K562 (cell line): ENCODE measurements at regions of chr20 and their contacts with region 1.

Region 1: DNA sequence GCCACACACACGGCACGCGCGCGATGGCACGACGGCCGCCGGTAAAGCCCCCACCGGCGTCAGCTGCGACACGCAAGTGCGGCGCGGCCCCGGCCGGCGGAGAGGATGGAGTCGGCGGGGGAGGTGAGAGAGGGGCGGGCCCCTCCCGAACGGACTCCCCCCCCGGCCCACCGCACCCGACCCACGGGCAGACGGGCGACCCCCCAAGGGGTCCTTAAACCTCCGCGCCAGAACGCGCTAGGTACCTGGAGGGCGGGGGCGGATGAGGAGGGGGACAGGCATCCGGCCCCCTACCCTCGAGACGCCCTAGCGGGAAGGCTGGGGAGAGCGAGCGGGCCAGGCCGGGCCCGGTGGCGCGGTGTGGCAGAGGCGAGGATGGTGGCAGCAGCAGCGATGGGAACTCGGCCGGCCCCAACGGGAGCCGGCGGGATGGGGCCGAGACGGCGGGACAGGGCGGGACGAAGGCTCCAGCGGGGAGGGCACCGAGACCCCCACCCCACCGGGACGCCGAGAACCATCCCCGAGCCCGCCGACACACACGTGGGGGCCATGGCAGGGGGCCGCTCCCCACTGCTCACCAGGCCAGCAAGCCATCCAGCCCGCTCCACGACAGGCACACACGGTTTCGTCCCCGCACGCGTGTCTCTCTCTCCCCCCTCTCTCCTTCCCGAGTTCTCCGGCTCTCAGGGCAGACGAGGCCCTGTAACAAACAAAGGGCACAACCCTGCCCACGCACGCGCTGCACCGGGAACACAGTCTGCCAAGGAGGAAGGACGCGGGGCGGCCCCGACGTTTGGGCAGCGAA is 1515.4 kb upstream of the DEFB115 start:
- DNase-seq: peak in 2 of 4 experiments; percentile 3
- ATAC-seq: no peak
- H3K4me3 ChIP-seq: no peak overlapping the region
- H3K27ac ChIP-seq: no peak overlapping the region
- H3K4me1 ChIP-seq: no peaks in the 10 kb centered on the region
- H3K27me3 ChIP-seq: no peaks in the 10 kb centered on the region
- CTCF ChIP-seq: no peak
- EP300 ChIP-seq: no peak
- POLR2A ChIP-seq: no peak
- RAD21 ChIP-seq: no peak

Region 2: DNA sequence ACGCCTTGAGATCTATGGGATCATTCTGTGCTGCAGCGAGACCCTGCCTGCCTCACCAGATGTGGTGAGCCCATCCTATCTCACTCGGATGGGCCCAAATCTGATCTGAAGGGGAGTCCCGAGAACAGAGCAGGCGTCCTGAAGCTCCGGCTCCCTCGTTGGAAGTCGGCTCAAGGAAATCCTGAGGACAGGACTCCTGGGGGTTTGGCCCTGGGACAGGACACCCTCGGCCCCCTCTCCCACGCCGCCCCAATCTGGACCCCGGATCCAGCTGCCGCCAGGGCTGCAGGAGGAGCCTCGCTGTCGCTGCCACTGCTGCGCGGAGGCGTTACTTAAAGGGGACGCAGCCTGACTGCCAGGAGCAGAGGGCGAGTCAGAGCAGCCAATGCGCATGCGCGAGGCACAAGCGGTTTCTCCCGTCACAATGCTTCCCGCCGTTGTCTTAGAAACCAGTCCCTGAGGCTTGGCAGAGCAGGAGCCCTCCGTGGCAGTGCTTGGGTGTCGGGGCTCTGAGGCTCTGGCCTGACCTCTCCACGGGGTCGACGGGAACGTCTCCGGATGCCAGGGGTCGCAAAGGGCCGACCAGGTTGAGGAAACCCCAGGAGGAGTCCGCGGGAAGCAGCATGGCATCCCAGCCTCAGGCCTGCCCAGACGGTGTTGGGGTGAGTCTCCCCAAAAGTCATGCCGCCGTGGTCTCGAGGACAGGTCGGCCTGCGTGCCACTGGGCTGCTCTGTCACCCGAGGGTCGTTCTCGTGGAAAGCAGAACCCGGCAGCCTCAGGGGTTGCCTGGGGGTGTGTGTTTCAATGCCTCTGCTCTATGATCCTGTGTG is 52.5 kb before region 1 on chr20:
- CTCF ChIA-PET with region 1: no interaction called
- POLR2A ChIA-PET with region 1: no interaction called
- in situ Hi-C with region 1: loop called (anchors 10 kb)
- intact Hi-C with region 1: no loop called
- DNase-seq: peak; percentile 66 to 76 (median 70)
- ATAC-seq: peak; percentile 96
- H3K4me3 ChIP-seq: peak overlapping the region; percentile 22; the same call in 1 of the 2 replicates
- H3K27ac ChIP-seq: no peak overlapping the region
- H3K4me1 ChIP-seq: peaks cover 0 to 12% of the 10 kb centered on the region in 2 experiments; a peak in 3 of 5 replicates
- H3K27me3 ChIP-seq: no peaks in the 10 kb centered on the region
- CTCF ChIP-seq: no peak
- EP300 ChIP-seq: no peak
- POLR2A ChIP-seq: no peak
- RAD21 ChIP-seq: no peak

Region 3: GRCh38 chr20:29763821-29764511 is 21.9 kb after region 1 on chr20:
- CTCF ChIA-PET with region 1: no interaction called
- POLR2A ChIA-PET with region 1: no interaction called
- in situ Hi-C with region 1: no loop called
- intact Hi-C with region 1: no loop called
- DNase-seq: peak in 1 of 4 experiments; percentile 0
- ATAC-seq: no peak
- H3K4me3 ChIP-seq: no peak overlapping the region
- H3K27ac ChIP-seq: no peak overlapping the region
- H3K4me1 ChIP-seq: peaks cover 0 to 5% of the 10 kb centered on the region in 2 experiments; a peak in 2 of 5 replicates
- H3K27me3 ChIP-seq: no peaks in the 10 kb centered on the region
- CTCF ChIP-seq: no peak
- EP300 ChIP-seq: no peak
- POLR2A ChIP-seq: no peak
- RAD21 ChIP-seq: no peak